ENCODE measurements at regions of chr5 and their contacts with region 1.

Region 1: DNA sequence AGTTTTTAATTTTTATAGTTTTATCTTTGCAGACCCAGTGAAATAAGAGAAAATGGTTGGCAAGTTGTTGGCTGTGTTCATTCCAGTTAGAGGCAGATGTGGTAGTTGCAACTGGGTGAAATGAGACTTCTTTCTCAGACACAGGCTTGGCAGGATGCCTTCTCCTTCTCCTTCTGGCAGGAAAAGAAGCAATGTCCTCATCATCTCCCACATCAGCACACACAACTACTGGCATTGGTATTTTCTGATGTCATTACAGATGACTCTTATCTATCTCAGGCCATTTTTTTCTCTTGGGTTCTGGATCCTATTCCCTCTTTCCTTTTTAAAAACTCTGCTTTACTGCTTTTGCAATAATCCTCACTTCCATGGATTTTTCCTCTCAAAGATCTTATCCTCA is 103.3 kb upstream of the EDIL3 start:
- DNase-seq: no peak
- H3K4me3 ChIP-seq: no peak overlapping the region
- H3K4me3 Mint-ChIP-seq: no peak overlapping the region
- H3K27ac ChIP-seq: no peak overlapping the region
- H3K27ac Mint-ChIP-seq: no peak overlapping the region
- H3K4me1 ChIP-seq: no peaks in the 10 kb centered on the region
- H3K4me1 Mint-ChIP-seq: no peaks in the 10 kb centered on the region
- H3K27me3 ChIP-seq: no peaks in the 10 kb centered on the region
- H3K27me3 Mint-ChIP-seq: no peaks in the 10 kb centered on the region

Region 2: GRCh38 chr5:84411831-84412605 is 75.9 kb before region 1 on chr5:
- CTCF ChIA-PET with region 1: no interaction called
- POLR2A ChIA-PET with region 1: no interaction called
- intact Hi-C with region 1: no loop called
- DNase-seq: no peak
- H3K4me3 ChIP-seq: no peak overlapping the region
- H3K4me3 Mint-ChIP-seq: no peak overlapping the region
- H3K27ac ChIP-seq: no peak overlapping the region
- H3K27ac Mint-ChIP-seq: no peak overlapping the region
- H3K4me1 ChIP-seq: no peaks in the 10 kb centered on the region
- H3K4me1 Mint-ChIP-seq: no peaks in the 10 kb centered on the region
- H3K27me3 ChIP-seq: no peaks in the 10 kb centered on the region
- H3K27me3 Mint-ChIP-seq: no peaks in the 10 kb centered on the region

Region 3: DNA sequence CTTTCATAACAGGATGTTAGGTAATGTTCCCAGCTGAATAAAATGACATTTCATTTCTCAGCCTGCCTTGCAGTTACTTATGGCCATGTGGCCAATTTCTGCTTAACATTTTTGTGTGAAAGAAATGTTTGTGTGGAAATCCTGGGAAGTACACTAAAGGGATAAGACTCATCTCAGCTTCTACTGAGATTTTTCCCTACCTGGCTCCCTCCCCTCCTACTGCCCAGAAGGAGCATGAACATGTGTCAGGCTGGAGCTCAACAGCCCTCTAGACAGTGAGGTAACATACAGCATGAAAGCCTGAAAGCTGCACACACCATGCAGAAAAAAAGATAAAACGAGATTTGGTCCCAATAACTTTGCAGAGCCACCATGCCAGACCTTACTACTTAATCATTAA is 1841.4 kb after region 1 on chr5:
- CTCF ChIA-PET with region 1: no interaction called
- POLR2A ChIA-PET with region 1: no interaction called
- intact Hi-C with region 1: loop called (anchors 5 kb)
- DNase-seq: no peak
- H3K4me3 ChIP-seq: no peak overlapping the region
- H3K4me3 Mint-ChIP-seq: no peak overlapping the region
- H3K27ac ChIP-seq: no peak overlapping the region
- H3K27ac Mint-ChIP-seq: no peak overlapping the region
- H3K4me1 ChIP-seq: no peaks in the 10 kb centered on the region
- H3K4me1 Mint-ChIP-seq: no peaks in the 10 kb centered on the region
- H3K27me3 ChIP-seq: no peaks in the 10 kb centered on the region
- H3K27me3 Mint-ChIP-seq: no peaks in the 10 kb centered on the region

Measured in CD4-positive, alpha-beta memory T cell (primary cell).